AG04449 (cell line): ENCODE measurements at regions of chr18 and their contacts with region 1.

Region 1: GRCh38 chr18:3245853-3246634 is 1.6 kb upstream of the MYL12A start:
- DNase-seq: no peak
- H3K4me3 ChIP-seq: peak overlapping the region; percentile 44
- CTCF ChIP-seq: peak; percentile 89

Region 2: GRCh38 chr18:2923464-2923863 is 322.6 kb before region 1 on chr18:
- CTCF ChIA-PET with region 1: interaction called, 21 read pairs
- POLR2A ChIA-PET with region 1: no interaction called
- DNase-seq: no peak
- H3K4me3 ChIP-seq: no peak overlapping the region
- CTCF ChIP-seq: no peak

Region 3: GRCh38 chr18:2939317-2939716 is 306.7 kb before region 1 on chr18:
- CTCF ChIA-PET with region 1: interaction called, 66 read pairs
- POLR2A ChIA-PET with region 1: interaction called, 3 read pairs
- DNase-seq: no peak
- H3K4me3 ChIP-seq: no peak overlapping the region
- CTCF ChIP-seq: no peak

Region 4: DNA sequence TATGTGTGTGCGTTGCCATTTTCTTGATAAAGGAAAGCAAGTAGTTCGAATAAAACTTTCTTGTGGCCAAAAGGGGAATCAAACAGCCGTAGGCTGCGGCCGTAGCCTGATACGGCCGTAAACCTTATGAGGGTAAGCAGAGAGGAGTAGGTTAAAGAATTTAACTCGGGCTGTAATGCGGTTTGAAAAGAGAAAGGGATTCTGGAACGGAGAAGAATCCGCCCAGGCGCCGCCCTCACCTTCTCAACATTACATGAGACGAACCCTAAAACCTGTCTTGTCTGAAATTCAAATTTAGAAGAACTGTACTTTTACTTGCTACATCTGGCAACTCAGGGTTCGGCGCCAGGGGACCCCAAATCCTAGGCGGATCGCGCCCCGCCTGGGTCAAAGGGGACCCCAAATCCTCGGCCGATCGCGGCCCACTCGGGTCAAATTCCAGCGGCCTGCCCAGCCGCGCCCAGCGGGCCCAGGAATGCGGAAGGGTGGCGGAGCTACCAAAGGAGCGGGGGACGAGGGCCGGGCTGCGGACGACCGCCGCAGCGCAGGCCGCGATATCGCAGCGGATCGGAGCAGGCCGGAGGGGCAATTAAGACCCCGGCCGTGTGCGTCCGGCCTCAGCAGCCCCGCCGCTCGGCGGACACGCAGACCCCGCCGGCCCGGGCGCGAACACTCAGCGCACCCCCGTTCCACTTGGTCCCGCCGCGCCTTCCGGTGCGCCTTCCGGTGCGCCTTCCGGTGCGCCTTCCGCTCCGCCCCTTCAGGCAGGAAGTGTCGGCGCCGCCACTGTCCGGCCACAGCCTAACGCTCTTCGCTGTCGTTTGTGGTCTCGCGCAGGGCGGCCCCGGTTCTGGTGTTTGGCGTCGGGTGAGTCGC is 15.6 kb after region 1 on chr18 and contains the start of gene MYL12B:
- CTCF ChIA-PET with region 1: interaction called, 6 read pairs
- POLR2A ChIA-PET with region 1: interaction called, 21 read pairs
- DNase-seq: no peak
- H3K4me3 ChIP-seq: peak within 1 kb of the TSS; percentile 90
- CTCF ChIP-seq: no peak